Motor neuron (in vitro differentiated cells): ENCODE measurements at regions of chr15 and their contacts with region 1.

Region 1: GRCh38 chr15:93087825-93088199 is 1.2 kb downstream of the RGMA start:
- ATAC-seq: peak; percentile 33 to 67 (median 41)
- H3K4me3 ChIP-seq: peak overlapping the region; percentile 60 to 92 (median 78)
- H3K27ac ChIP-seq: peak overlapping the region; percentile 85 to 87
- H3K4me1 ChIP-seq: peaks cover 33% of the 10 kb centered on the region in 2 donors

Region 2: DNA sequence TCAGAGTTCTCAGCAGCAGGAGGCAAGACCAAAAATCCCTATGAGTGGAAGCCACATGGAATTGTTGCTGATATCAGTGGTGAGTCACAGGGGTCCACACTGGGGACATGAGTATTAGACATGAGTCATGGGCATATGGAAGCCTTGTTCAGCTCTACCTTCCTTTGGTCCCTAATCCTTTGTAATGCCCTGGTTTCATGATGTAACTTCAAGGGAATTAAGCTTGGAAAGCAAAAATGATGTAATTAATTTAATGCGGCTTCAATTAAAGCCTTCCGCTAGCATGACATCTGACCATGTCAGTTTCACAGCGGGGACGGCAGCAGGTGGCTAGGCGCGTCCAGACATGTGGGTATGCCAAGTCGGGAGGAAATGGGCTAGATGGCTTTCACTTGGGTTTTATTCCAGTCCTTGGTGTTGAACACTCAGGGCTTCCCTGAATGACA is 177.3 kb after region 1 on chr15:
- in situ Hi-C with region 1: loop called in 1 of 9 experiments (anchors 25 kb)
- ATAC-seq: peak in 2 of 8 experiments; percentile 29 to 36
- H3K4me3 ChIP-seq: no peak overlapping the region
- H3K27ac ChIP-seq: no peak overlapping the region
- H3K4me1 ChIP-seq: no peaks in the 10 kb centered on the region

Region 3: GRCh38 chr15:93321881-93322289 is 234.1 kb after region 1 on chr15:
- in situ Hi-C with region 1: loop called in 1 of 9 experiments (anchors 25 kb)
- ATAC-seq: peak; percentile 60 to 100 (median 82)
- H3K4me3 ChIP-seq: no peak overlapping the region
- H3K27ac ChIP-seq: no peak overlapping the region
- H3K4me1 ChIP-seq: peaks cover 10 to 13% of the 10 kb centered on the region in 2 donors

Region 4: GRCh38 chr15:93485438-93486327 is 397.9 kb after region 1 on chr15:
- in situ Hi-C with region 1: loop called in 1 of 9 experiments (anchors 25 kb)
- ATAC-seq: peak in 2 of 8 experiments; percentile 18 to 22
- H3K4me3 ChIP-seq: no peak overlapping the region
- H3K27ac ChIP-seq: no peak overlapping the region
- H3K4me1 ChIP-seq: peaks cover under 1 to 9% of the 10 kb centered on the region in 2 donors

Region 5: DNA sequence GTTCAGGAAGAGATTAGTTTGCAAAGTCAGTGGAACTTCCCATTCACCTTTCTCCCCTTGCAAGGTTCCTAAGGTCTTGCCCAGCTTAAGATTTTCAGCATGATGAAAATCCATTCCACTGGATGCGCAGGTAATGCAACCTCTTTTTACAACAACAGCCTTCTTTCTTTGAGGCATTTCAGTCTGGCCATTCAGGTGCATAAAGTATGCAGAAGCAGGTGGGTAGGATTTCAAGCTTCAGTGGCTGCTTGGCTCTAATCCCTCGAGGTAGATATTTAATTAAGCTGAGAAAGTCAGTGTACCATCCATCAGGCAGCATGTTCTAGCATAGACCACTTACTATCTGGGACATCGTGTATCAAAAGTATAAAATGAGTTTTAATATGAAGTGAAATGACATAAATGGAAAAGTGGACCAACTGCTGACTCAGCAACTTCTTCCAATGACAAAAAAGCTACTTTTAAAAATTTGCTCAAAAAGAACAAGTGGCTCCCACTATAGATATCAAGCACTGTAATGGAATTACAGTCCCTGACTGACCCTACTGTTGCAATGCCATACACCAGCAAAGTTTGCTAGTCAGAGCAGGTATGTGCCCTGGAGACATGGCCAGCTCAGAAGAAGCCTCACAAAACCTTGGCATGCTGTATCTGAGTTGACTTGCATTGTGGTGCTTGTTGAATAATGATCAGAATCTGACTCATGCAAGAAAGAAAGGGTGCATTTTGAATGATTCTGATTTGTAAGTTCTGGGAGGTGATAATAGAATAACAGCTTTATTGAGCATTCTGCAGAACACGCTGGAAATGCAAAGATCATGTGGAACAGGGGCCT is 683.6 kb after region 1 on chr15:
- in situ Hi-C with region 1: loop called in 1 of 9 experiments (anchors 25 kb)
- ATAC-seq: peak in 2 of 8 experiments; percentile 59 to 75
- H3K4me3 ChIP-seq: no peak overlapping the region
- H3K27ac ChIP-seq: no peak overlapping the region
- H3K4me1 ChIP-seq: peaks cover 21 to 23% of the 10 kb centered on the region in 2 donors

Region 6: DNA sequence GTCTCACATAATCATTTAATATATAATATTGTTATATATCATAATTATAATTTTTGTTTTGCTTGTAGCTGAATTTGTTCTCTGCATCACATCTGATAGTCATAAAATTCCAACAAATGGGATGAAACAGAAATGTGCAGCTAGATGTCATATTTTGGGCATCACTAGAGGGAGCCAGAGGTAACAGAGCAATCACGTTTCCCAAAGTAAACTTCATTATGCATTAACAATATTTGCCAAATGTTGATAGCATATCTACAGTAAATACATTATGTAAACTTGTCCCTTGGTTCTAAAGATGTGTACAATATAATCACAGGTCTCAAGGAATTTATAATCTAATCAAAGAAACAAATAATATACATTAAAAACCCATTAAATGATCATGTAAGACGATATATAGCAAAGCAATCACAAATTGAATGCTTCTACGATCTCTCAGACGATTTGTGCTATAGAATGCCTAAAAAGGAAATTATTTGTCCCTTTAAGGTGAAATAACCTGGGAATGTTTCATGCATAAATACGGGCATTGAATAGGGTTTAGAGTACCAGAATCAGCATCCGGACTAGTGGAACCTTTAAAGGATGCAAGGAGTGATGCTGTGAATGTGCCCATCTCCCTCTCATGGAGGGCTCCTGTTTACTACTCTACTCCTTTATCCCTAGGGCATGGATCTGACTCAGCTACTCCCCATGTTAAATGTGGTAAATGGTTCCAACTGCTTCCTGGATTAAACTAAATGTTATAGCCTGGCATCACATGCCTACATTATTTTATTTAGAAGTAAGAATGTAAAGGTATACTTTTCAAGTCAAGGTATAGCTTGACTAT is 909.5 kb after region 1 on chr15:
- in situ Hi-C with region 1: loop called in 1 of 9 experiments (anchors 25 kb)
- ATAC-seq: no peak
- H3K4me3 ChIP-seq: no peak overlapping the region
- H3K27ac ChIP-seq: no peak overlapping the region
- H3K4me1 ChIP-seq: peaks cover 7 to 27% of the 10 kb centered on the region in 2 donors